ENCODE measurements at regions of chr22 and their contacts with region 1.

Region 1: DNA sequence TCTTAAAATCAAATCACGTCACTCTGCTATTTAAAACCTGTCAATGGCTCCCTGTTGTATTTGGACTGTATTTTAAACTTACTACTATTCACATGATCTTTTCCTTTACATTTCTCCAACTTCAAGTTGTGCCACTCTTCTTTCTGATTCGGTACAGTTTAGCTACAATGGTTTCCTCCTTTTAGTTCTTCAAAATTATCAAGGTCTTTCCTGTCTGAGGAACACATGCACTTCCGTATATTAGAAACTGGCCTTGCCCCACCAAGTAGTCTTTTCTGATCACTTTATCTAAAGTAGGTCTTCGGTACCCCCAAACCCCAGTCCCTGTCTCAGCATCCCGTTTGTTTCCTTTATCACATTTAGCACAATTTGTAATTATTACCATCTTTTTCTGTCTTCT is 81.8 kb downstream of the MTMR3 start:
- DNase-seq: no peak
- ATAC-seq: no peak
- H3K4me3 ChIP-seq: no peak overlapping the region
- H3K27ac ChIP-seq: no peak overlapping the region
- H3K4me1 ChIP-seq: peaks cover 0 to 14% (median 0%) of the 10 kb centered on the region in 9 donors
- H3K27me3 ChIP-seq: no peaks in the 10 kb centered on the region
- CTCF ChIP-seq: no peak

Region 2: GRCh38 chr22:29937940-29938693 is 26.7 kb before region 1 on chr22:
- intact Hi-C with region 1: loop called in 1 of 10 experiments (anchors 2 kb)
- DNase-seq: no peak
- ATAC-seq: no peak
- H3K4me3 ChIP-seq: no peak overlapping the region
- H3K27ac ChIP-seq: no peak overlapping the region
- H3K4me1 ChIP-seq: peaks cover 0 to 44% (median 30%) of the 10 kb centered on the region in 9 donors
- H3K27me3 ChIP-seq: no peaks in the 10 kb centered on the region
- CTCF ChIP-seq: no peak

Measured in heart right ventricle (tissue), 16 donors.